K562 (cell line): ENCODE measurements at regions of chr6 and their contacts with region 1.

Region 1: DNA sequence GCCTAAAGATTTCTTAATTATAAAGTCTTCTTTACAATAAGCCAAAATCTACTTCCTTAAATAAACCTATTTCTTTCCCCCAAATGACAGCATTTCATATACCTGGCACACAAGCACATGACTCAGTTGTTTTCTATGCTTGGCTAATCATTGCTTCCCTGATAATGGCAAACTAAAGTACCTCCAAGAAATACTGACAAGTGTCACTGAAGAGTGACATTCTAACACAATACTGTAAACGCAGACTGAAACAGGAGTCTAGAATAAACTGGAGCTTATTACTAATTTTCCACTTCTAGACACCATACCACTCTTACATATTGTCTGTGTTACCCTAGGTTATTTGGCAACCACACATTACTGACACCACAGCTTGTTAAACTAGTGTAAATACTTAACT is 14.3 kb downstream of the SYNCRIP start:
- DNase-seq: no peak
- ATAC-seq: no peak; the same call in 2 of the 3 replicates
- H3K4me3 ChIP-seq: no peak overlapping the region
- H3K27ac ChIP-seq: no peak overlapping the region
- H3K4me1 ChIP-seq: no peaks in the 10 kb centered on the region
- H3K27me3 ChIP-seq: no peaks in the 10 kb centered on the region
- CTCF ChIP-seq: no peak
- EP300 ChIP-seq: no peak
- POLR2A ChIP-seq: no peak
- RAD21 ChIP-seq: no peak

Region 2: GRCh38 chr6:85642774-85643536 is 14.6 kb after region 1 on chr6 and contains the start of gene SYNCRIP:
- CTCF ChIA-PET with region 1: no interaction called
- POLR2A ChIA-PET with region 1: interaction called, 75 read pairs
- in situ Hi-C with region 1: no loop called
- intact Hi-C with region 1: no loop called
- DNase-seq: peak; percentile 71 to 98 (median 90)
- ATAC-seq: peak; percentile 86
- H3K4me3 ChIP-seq: peak within 1 kb of the TSS; percentile 87
- H3K27ac ChIP-seq: peak within 1 kb of the TSS; percentile 98
- H3K4me1 ChIP-seq: peaks cover 13 to 19% of the 10 kb centered on the region in 2 experiments; a peak in 4 of 5 replicates
- H3K27me3 ChIP-seq: no peaks in the 10 kb centered on the region
- CTCF ChIP-seq: no peak
- EP300 ChIP-seq: peak; percentile 19; the same call in 1 of the 2 replicates
- POLR2A ChIP-seq: peak; percentile 99
- RAD21 ChIP-seq: no peak
- polyA plus RNA-seq, gene SYNCRIP: 124 to 140 TPM